ENCODE measurements at regions of chr19 and their contacts with region 1.

Region 1: DNA sequence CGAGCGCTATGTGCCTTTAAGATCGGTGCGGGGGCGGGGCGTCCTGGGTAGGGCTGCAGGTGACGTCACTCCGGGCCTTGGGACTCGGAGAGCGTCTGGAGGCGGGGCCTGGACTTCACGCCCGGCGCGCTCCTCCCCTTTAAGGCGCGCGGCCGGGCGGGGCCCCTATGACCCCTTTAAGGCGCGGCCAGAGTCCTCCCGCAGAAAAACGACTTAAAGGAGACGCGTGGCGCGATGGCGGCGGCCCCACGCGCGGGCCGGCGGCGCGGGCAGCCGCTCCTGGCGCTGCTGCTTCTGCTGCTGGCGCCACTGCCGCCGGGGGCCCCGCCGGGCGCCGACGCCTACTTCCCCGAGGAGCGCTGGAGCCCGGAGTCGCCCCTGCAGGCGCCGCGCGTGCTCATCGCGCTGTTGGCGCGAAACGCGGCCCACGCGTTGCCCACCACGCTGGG is at the start of gene COLGALT1:
- DNase-seq: peak; percentile 99
- ATAC-seq: peak; percentile 96
- H3K4me3 ChIP-seq: peak within 1 kb of the TSS; percentile 52 to 85 (median 78)
- H3K4me3 Mint-ChIP-seq: peak within 1 kb of the TSS; percentile 86
- H3K27ac ChIP-seq: peak within 1 kb of the TSS; percentile 61 to 74
- H3K27ac Mint-ChIP-seq: peak within 1 kb of the TSS; percentile 81
- H3K4me1 ChIP-seq: peaks cover 13 to 18% of the 10 kb centered on the region in 2 donors
- H3K4me1 Mint-ChIP-seq: peaks cover 18% of the 10 kb centered on the region
- H3K27me3 ChIP-seq: no peaks in the 10 kb centered on the region
- H3K27me3 Mint-ChIP-seq: no peaks in the 10 kb centered on the region
- CTCF ChIP-seq: no peak
- total RNA-seq, gene COLGALT1: 108 and 109 TPM in 2 replicates

Region 2: DNA sequence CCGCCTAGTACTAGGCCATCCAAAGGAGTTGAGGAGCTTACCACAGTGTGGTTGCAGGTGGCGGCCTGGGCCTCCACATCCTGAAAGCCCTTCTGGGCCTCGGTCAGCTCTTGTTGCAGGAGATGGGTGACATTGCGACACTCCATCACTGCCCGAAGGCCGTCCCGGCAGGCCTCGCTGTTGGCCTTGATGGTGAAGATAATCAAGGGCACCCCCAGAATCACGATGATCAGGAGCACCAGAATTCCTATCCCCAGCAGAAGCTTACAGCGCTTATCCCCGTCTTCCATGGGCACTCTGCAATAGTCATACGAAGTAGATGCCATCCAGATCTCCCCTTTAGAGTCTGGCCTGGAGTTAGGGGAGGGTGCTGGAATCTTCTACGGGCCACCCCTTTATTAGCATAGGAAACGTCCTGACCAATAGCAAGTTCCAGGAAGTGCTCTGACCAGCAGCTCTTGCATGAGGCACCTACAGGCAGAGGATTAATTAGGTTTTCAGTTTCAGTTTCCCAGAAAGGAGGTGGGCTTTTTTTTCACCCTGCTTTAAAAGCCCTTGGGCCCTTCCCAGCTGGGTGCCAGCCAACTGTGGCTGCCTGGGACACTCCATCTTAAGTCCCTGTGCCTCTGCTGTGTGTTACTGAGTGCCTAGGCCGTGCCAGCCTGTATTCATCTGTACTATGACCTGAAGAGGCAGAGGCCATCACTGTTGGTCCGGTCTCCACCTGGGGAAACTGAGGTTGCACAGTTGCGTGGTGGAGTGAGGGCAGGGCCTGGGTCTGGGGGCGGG is 150.1 kb before region 1 on chr19 and contains the start of gene BST2:
- CTCF ChIA-PET with region 1: no interaction called
- POLR2A ChIA-PET with region 1: no interaction called
- intact Hi-C with region 1: loop called (anchors 10 kb)
- DNase-seq: peak; percentile 81
- ATAC-seq: peak; percentile 91
- H3K4me3 ChIP-seq: peak within 1 kb of the TSS; percentile 62 to 95 (median 75)
- H3K4me3 Mint-ChIP-seq: peak within 1 kb of the TSS; percentile 85
- H3K27ac ChIP-seq: peak within 1 kb of the TSS; percentile 72 to 86
- H3K27ac Mint-ChIP-seq: peak within 1 kb of the TSS; percentile 86
- H3K4me1 ChIP-seq: peaks cover 26 to 45% of the 10 kb centered on the region in 2 donors
- H3K4me1 Mint-ChIP-seq: peaks cover 42% of the 10 kb centered on the region
- H3K27me3 ChIP-seq: no peaks in the 10 kb centered on the region
- H3K27me3 Mint-ChIP-seq: no peaks in the 10 kb centered on the region
- CTCF ChIP-seq: no peak
- total RNA-seq, gene BST2: 59.7 and 66.0 TPM in 2 replicates

Region 3: DNA sequence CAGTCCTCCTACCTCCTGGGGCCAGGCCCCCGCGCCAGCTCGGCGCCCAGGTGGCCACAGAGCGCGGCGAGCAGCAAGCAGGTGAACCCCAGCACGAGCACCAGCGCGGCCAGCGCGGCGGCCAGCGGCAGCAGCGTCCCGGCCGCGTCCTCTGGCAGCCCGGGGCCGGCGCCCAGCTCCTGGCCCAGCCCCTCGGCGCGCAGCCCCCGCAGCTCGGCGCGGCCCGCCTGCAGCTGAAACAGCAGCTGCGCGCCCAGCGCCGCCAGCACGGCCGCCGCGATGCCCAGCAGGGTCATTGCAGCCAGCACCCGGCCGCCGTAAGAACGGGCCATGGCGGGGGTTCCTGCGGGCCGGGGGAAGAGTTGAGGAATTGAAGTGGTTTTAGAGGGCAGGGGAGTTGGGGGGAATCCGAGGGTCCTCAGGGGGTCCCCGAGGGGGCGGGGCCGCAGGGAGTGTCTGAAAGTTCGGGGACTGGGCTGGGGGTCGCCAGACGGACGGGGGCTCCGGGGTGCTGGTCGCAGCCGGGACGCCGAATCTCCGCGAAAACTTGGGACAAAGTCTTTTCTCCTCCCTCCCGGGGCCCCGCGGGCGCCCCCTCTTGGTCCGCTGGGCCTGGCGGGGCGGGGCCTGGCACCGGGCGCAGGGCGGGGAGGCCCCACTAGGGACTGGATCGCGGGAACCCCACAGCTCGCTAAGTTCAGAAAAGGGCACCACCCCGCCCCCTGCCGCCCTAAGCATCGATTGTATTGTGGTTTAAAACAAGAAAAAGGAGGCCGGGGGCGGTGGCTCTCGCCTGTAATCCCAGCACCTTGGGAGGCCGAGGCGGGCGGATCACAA is 107.2 kb before region 1 on chr19 and contains the start of gene TMEM221:
- CTCF ChIA-PET with region 1: no interaction called
- POLR2A ChIA-PET with region 1: no interaction called
- intact Hi-C with region 1: no loop called
- DNase-seq: peak; percentile 73
- ATAC-seq: peak; percentile 86
- H3K4me3 ChIP-seq: peak within 1 kb of the TSS in 3 of 5 experiments; percentile 3 to 29 (median 15)
- H3K4me3 Mint-ChIP-seq: peak within 1 kb of the TSS; percentile 48
- H3K27ac ChIP-seq: no peak within 1 kb of the TSS
- H3K27ac Mint-ChIP-seq: no peak within 1 kb of the TSS
- H3K4me1 ChIP-seq: peaks cover 6 to 12% of the 10 kb centered on the region in 2 donors
- H3K4me1 Mint-ChIP-seq: peaks cover 13% of the 10 kb centered on the region
- H3K27me3 ChIP-seq: peaks cover 0 to 53% (median 15%) of the 10 kb centered on the region in 4 experiments
- H3K27me3 Mint-ChIP-seq: peaks cover 28% of the 10 kb centered on the region
- CTCF ChIP-seq: peak; percentile 68
- total RNA-seq, gene TMEM221: not detected in 2 replicates

Region 4: GRCh38 chr19:17496337-17496997 is 59.0 kb before region 1 on chr19:
- CTCF ChIA-PET with region 1: interaction called, 13 read pairs
- POLR2A ChIA-PET with region 1: no interaction called
- intact Hi-C with region 1: loop called (anchors 10 kb)
- DNase-seq: peak; percentile 88
- ATAC-seq: peak; percentile 99
- H3K4me3 ChIP-seq: no peak overlapping the region
- H3K4me3 Mint-ChIP-seq: peak overlapping the region; percentile 16
- H3K27ac ChIP-seq: no peak overlapping the region
- H3K27ac Mint-ChIP-seq: no peak overlapping the region
- H3K4me1 ChIP-seq: peaks cover 7 to 21% of the 10 kb centered on the region in 2 donors
- H3K4me1 Mint-ChIP-seq: peaks cover 25% of the 10 kb centered on the region
- H3K27me3 ChIP-seq: no peaks in the 10 kb centered on the region
- H3K27me3 Mint-ChIP-seq: no peaks in the 10 kb centered on the region
- CTCF ChIP-seq: peak; percentile 97

Region 5: GRCh38 chr19:17511724-17512573 is 43.6 kb before region 1 on chr19:
- CTCF ChIA-PET with region 1: no interaction called
- POLR2A ChIA-PET with region 1: interaction called, 6 read pairs
- intact Hi-C with region 1: loop called (anchors 1 kb)
- DNase-seq: peak; percentile 96
- ATAC-seq: peak; percentile 84
- H3K4me3 ChIP-seq: peak overlapping the region; percentile 68 to 98 (median 85)
- H3K4me3 Mint-ChIP-seq: peak overlapping the region; percentile 96
- H3K27ac ChIP-seq: peak overlapping the region; percentile 82 to 94
- H3K27ac Mint-ChIP-seq: peak overlapping the region; percentile 95
- H3K4me1 ChIP-seq: peaks cover 18 to 24% of the 10 kb centered on the region in 2 donors
- H3K4me1 Mint-ChIP-seq: peaks cover 40% of the 10 kb centered on the region
- H3K27me3 ChIP-seq: no peaks in the 10 kb centered on the region
- H3K27me3 Mint-ChIP-seq: no peaks in the 10 kb centered on the region
- CTCF ChIP-seq: peak; percentile 38

Region 6: GRCh38 chr19:17522988-17523872 is 32.3 kb before region 1 on chr19:
- CTCF ChIA-PET with region 1: interaction called, 5 read pairs
- POLR2A ChIA-PET with region 1: interaction called, 10 read pairs
- intact Hi-C with region 1: loop called (anchors 1 kb)
- DNase-seq: peak; percentile 92
- ATAC-seq: peak; percentile 71
- H3K4me3 ChIP-seq: peak overlapping the region in 4 of 5 experiments; percentile 28 to 40 (median 34)
- H3K4me3 Mint-ChIP-seq: peak overlapping the region; percentile 80
- H3K27ac ChIP-seq: peak overlapping the region; percentile 75 to 88
- H3K27ac Mint-ChIP-seq: peak overlapping the region; percentile 97
- H3K4me1 ChIP-seq: peaks cover 51 to 56% of the 10 kb centered on the region in 2 donors
- H3K4me1 Mint-ChIP-seq: peaks cover 57% of the 10 kb centered on the region
- H3K27me3 ChIP-seq: no peaks in the 10 kb centered on the region
- H3K27me3 Mint-ChIP-seq: no peaks in the 10 kb centered on the region
- CTCF ChIP-seq: no peak

Region 7: GRCh38 chr19:17539238-17540117 is 16.0 kb before region 1 on chr19:
- CTCF ChIA-PET with region 1: no interaction called
- POLR2A ChIA-PET with region 1: interaction called, 15 read pairs
- intact Hi-C with region 1: loop called (anchors 1 kb)
- DNase-seq: peak; percentile 99
- ATAC-seq: peak; percentile 92
- H3K4me3 ChIP-seq: peak overlapping the region in 4 of 5 experiments; percentile 14 to 53 (median 40)
- H3K4me3 Mint-ChIP-seq: peak overlapping the region; percentile 93
- H3K27ac ChIP-seq: peak overlapping the region; percentile 54 to 59
- H3K27ac Mint-ChIP-seq: peak overlapping the region; percentile 97
- H3K4me1 ChIP-seq: peaks cover 26 to 46% of the 10 kb centered on the region in 2 donors
- H3K4me1 Mint-ChIP-seq: peaks cover 54% of the 10 kb centered on the region
- H3K27me3 ChIP-seq: no peaks in the 10 kb centered on the region
- H3K27me3 Mint-ChIP-seq: no peaks in the 10 kb centered on the region
- CTCF ChIP-seq: no peak

Region 8: DNA sequence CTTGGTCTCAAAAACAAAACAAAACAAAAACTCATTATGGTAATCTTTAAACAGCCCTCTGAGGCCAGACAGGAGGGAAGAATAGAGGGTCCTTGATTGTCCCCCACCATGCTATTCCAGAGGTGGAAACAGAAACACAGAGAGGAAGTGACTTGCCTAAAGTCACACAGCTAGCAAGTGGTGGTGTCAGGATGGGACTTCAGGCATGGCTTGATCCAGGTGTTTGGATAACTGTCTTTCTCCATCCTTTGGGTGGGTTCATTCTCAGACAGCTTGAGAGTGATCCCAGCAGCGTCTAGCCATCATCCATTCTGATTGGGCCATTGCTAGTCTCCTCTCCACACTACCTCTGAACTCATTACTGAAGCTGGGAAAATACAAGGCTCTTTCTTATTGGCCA is 12.4 kb after region 1 on chr19:
- CTCF ChIA-PET with region 1: no interaction called
- POLR2A ChIA-PET with region 1: no interaction called
- intact Hi-C with region 1: no loop called
- DNase-seq: no peak
- ATAC-seq: no peak
- H3K4me3 ChIP-seq: no peak overlapping the region
- H3K4me3 Mint-ChIP-seq: no peak overlapping the region
- H3K27ac ChIP-seq: no peak overlapping the region
- H3K27ac Mint-ChIP-seq: no peak overlapping the region
- H3K4me1 ChIP-seq: no peaks in the 10 kb centered on the region
- H3K4me1 Mint-ChIP-seq: no peaks in the 10 kb centered on the region
- H3K27me3 ChIP-seq: no peaks in the 10 kb centered on the region
- H3K27me3 Mint-ChIP-seq: no peaks in the 10 kb centered on the region
- CTCF ChIP-seq: no peak

Region 9: DNA sequence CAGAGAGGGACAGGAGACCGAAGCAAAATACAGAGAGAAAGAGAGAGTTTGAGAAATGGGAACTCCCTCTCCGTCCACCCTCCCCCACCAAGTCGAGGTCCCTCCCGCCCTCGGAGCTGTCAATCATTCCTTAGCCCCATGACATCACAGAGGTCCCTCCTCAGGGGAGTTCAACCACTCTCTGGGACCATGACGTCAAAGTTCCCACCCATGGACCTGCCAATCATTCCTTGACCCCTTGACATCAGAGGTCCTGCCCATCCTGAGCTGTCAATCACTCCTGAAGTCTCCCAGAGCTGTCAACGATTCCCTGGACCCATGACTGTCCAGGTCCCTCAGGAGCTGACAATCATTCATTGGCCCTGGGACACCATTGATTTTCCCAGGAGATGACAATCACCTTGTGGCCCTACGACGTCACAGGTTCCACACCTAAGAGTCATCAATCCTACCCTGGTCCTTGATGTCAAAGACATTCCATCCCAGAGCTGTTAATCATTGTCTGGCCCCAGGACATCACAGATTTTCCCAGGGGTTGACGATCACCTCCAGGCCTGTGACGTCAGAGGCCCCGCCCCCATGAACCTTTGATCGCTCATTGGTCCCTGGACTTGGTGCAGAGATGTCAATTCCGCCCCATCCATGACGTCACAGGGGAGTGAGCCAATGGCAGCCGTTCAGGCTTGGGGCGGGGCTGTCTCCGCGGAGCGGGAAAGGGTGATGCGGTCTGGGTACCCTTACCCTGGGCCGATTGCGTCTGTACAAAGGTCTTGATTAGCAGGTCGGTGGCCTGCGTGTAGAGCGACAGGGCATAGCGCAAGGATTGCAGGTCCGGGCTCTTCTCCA is 61.7 kb after region 1 on chr19:
- CTCF ChIA-PET with region 1: no interaction called
- POLR2A ChIA-PET with region 1: no interaction called
- intact Hi-C with region 1: no loop called
- DNase-seq: peak; percentile 52
- ATAC-seq: no peak
- H3K4me3 ChIP-seq: no peak overlapping the region
- H3K4me3 Mint-ChIP-seq: peak overlapping the region; percentile 41
- H3K27ac ChIP-seq: no peak overlapping the region
- H3K27ac Mint-ChIP-seq: no peak overlapping the region
- H3K4me1 ChIP-seq: peaks cover 11 to 14% of the 10 kb centered on the region in 2 donors
- H3K4me1 Mint-ChIP-seq: peaks cover 5% of the 10 kb centered on the region
- H3K27me3 ChIP-seq: peaks cover 0 to 36% (median 10%) of the 10 kb centered on the region in 4 experiments
- H3K27me3 Mint-ChIP-seq: peaks cover 32% of the 10 kb centered on the region
- CTCF ChIP-seq: no peak

Region 10: GRCh38 chr19:18379803-18380747 is 824.6 kb after region 1 on chr19:
- CTCF ChIA-PET with region 1: no interaction called
- POLR2A ChIA-PET with region 1: no interaction called
- intact Hi-C with region 1: no loop called
- DNase-seq: no peak
- ATAC-seq: no peak
- H3K4me3 ChIP-seq: no peak overlapping the region
- H3K4me3 Mint-ChIP-seq: no peak overlapping the region
- H3K27ac ChIP-seq: no peak overlapping the region
- H3K27ac Mint-ChIP-seq: no peak overlapping the region
- H3K4me1 ChIP-seq: no peaks in the 10 kb centered on the region
- H3K4me1 Mint-ChIP-seq: no peaks in the 10 kb centered on the region
- H3K27me3 ChIP-seq: peaks cover 0 to 43% (median 12%) of the 10 kb centered on the region in 4 experiments
- H3K27me3 Mint-ChIP-seq: peaks cover 25% of the 10 kb centered on the region
- CTCF ChIP-seq: no peak